CD8-positive, alpha-beta T cell (primary cell): ENCODE measurements at regions of chr19 and their contacts with region 1.

Region 1: DNA sequence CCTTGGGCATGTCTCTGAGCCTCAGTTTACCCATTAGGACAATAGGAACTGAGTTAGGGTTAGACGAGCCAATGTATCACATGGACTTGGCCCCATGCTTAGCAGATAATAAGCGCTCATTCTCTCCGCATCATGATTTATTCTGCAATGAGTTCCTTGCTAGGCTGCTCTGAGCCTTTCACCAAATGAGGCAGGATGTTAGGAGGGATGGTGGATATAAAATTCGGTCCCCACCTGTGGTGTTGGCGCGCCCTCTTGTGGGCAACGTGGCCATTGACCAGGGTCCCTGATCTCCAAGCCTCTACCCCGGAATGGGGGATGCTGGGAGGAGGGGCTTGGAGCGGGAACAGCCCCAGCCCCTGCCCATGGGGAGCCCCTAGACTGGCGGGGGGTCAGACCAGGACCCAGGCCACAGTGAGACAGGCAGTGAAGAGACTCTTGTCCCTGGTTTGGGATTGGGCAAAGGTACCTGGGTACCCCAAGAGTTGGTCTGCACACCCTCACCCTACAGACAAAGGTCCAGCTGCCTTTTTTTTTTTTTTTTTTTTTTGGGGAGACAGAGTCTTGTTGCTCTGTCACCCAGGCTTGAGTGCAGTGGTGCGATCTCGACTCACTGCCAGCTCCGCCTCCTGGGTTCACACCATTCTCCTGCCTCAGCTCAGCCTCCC is 43.9 kb downstream of the CERS4 start:
- DNase-seq: peak; percentile 66 to 91 (median 84)
- ATAC-seq: peak; percentile 93
- H3K4me3 ChIP-seq: no peak overlapping the region
- H3K4me3 Mint-ChIP-seq: no peak overlapping the region
- H3K27ac ChIP-seq: no peak overlapping the region
- H3K27ac Mint-ChIP-seq: no peak overlapping the region
- H3K4me1 ChIP-seq: peaks cover 3% of the 10 kb centered on the region
- H3K4me1 Mint-ChIP-seq: peaks cover 10% of the 10 kb centered on the region
- H3K27me3 ChIP-seq: no peaks in the 10 kb centered on the region
- H3K27me3 Mint-ChIP-seq: no peaks in the 10 kb centered on the region
- CTCF ChIP-seq: peak; percentile 85

Region 2: GRCh38 chr19:7562646-7563393 is 690.2 kb before region 1 on chr19:
- CTCF ChIA-PET with region 1: no interaction called
- POLR2A ChIA-PET with region 1: no interaction called
- intact Hi-C with region 1: loop called in 1 of 2 experiments (anchors 5 kb)
- DNase-seq: peak in 1 of 9 experiments; percentile 23
- ATAC-seq: no peak
- H3K4me3 ChIP-seq: no peak overlapping the region
- H3K4me3 Mint-ChIP-seq: no peak overlapping the region
- H3K27ac ChIP-seq: no peak overlapping the region
- H3K27ac Mint-ChIP-seq: no peak overlapping the region
- H3K4me1 ChIP-seq: no peaks in the 10 kb centered on the region
- H3K4me1 Mint-ChIP-seq: no peaks in the 10 kb centered on the region
- H3K27me3 ChIP-seq: no peaks in the 10 kb centered on the region
- H3K27me3 Mint-ChIP-seq: no peaks in the 10 kb centered on the region
- CTCF ChIP-seq: no peak

Region 3: GRCh38 chr19:7970716-7971448 is 282.2 kb before region 1 on chr19:
- CTCF ChIA-PET with region 1: no interaction called
- POLR2A ChIA-PET with region 1: no interaction called
- intact Hi-C with region 1: loop called in 1 of 2 experiments (anchors 1 kb)
- DNase-seq: peak in 4 of 9 experiments; percentile 14 to 46 (median 25)
- ATAC-seq: no peak
- H3K4me3 ChIP-seq: no peak overlapping the region
- H3K4me3 Mint-ChIP-seq: no peak overlapping the region
- H3K27ac ChIP-seq: no peak overlapping the region
- H3K27ac Mint-ChIP-seq: no peak overlapping the region
- H3K4me1 ChIP-seq: no peaks in the 10 kb centered on the region
- H3K4me1 Mint-ChIP-seq: no peaks in the 10 kb centered on the region
- H3K27me3 ChIP-seq: no peaks in the 10 kb centered on the region
- H3K27me3 Mint-ChIP-seq: no peaks in the 10 kb centered on the region
- CTCF ChIP-seq: peak; percentile 58

Region 4: DNA sequence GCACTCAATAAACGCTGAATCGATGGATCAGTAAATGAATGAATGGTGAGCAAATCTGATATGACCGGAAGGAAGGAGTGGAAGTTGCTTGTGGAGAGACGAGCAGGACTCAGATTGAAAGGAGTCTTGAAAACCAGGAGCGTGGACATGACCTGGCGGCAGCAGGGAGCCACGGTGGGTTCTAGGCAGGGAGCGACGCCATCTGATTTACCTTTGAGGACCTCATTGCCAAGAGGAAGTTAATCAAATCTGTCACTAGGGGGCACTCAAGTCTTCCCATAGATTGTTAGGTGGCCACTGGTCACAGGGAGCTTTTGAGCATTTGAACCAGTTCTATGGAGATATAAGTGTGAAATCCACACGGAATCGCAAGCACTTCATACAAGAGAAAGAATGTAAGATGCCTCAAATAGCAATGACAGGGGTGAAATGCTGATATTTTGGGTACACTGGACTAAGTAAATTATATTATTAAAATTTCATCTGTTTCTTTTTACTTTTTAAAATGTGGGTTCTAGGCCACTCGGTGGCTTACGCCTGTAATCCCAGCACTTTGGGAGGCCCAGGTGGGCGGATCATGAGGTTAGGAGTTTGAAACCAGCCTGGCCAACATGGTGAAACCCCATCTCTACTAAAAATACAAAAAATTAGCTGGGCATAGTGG is 94.5 kb before region 1 on chr19:
- CTCF ChIA-PET with region 1: interaction called, 17 read pairs
- POLR2A ChIA-PET with region 1: interaction called, 5 read pairs
- intact Hi-C with region 1: loop called in 1 of 2 experiments (anchors 1 kb)
- DNase-seq: peak in 7 of 9 experiments; percentile 21 to 84 (median 42)
- ATAC-seq: peak; percentile 40
- H3K4me3 ChIP-seq: no peak overlapping the region
- H3K4me3 Mint-ChIP-seq: no peak overlapping the region
- H3K27ac ChIP-seq: no peak overlapping the region
- H3K27ac Mint-ChIP-seq: no peak overlapping the region
- H3K4me1 ChIP-seq: no peaks in the 10 kb centered on the region
- H3K4me1 Mint-ChIP-seq: no peaks in the 10 kb centered on the region
- H3K27me3 ChIP-seq: peaks cover 0 to 3% of the 10 kb centered on the region in 2 experiments
- H3K27me3 Mint-ChIP-seq: peaks cover 21% of the 10 kb centered on the region
- CTCF ChIP-seq: peak; percentile 62

Region 5: DNA sequence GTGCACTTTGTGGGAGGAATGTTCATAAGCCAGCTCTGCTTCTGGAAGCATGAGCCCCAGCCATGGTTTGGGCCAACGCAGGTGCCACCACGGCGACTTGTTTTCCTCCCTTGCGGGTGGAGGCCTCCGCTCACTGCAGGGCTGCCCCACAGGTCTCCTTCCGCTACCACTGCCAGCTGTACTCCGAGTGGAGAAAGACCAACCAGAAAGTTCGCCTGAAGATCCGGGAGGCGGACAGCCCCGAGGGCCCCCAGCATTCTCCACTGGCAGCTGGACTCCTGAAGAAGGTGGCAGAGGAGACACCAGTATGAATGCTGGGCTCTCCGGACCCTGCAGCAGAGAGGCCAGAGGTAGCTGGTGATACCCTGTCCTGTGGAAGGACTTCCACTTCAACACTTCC is 185.2 kb after region 1 on chr19:
- CTCF ChIA-PET with region 1: no interaction called
- POLR2A ChIA-PET with region 1: no interaction called
- intact Hi-C with region 1: no loop called
- DNase-seq: no peak
- ATAC-seq: no peak
- H3K4me3 ChIP-seq: no peak overlapping the region
- H3K4me3 Mint-ChIP-seq: no peak overlapping the region
- H3K27ac ChIP-seq: no peak overlapping the region
- H3K27ac Mint-ChIP-seq: no peak overlapping the region
- H3K4me1 ChIP-seq: no peaks in the 10 kb centered on the region
- H3K4me1 Mint-ChIP-seq: peaks cover 4% of the 10 kb centered on the region
- H3K27me3 ChIP-seq: no peaks in the 10 kb centered on the region
- H3K27me3 Mint-ChIP-seq: no peaks in the 10 kb centered on the region
- CTCF ChIP-seq: no peak